Aorta (tissue), 5 donors: ENCODE measurements at regions of chr21 and their contacts with region 1.

Region 1: DNA sequence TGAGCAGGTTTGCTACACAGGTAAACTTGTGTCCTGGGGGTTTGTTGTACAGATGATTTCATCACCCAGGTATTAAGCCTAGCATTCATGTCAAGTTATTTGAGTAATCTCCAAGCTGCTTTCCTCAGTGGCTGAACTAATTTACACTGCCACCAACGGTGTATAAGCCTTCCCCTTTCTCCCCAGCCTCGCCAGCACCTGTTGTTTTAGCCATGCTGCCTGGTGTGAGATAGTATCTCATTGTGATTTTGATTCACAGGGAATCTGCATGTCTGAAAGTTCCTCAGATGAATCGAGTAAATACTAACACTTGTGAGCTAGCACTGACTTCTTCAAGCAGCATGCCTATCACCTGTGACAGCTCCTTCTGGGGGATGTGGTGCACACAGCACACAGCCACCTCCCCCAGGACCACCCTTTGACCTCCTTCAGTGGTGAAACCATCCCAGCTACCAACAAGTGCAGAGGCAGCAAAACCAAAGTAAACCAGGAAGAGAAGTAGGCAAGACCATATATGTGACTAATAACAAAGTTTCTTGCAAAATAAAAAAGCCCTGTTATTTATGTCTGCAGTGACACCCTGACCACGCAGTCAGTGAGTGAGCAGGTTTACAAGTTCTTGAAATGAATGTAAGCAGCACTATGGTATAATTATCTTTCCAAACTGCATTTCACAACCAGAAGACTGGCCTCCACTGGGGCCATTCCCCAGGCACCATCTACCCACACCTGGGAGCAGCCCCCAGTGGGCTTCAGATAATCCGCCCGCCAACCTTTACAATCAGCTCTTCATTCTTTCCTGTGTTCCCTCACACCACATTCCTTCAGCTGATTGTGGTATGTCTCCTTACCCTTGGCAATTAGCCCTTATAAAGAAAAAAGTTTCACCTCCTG is 173.7 kb downstream of the ETS2 start:
- DNase-seq: no peak
- ATAC-seq: no peak
- H3K4me3 ChIP-seq: no peak overlapping the region
- H3K27ac ChIP-seq: no peak overlapping the region
- H3K4me1 ChIP-seq: no peaks in the 10 kb centered on the region
- H3K27me3 ChIP-seq: no peaks in the 10 kb centered on the region

Region 2: DNA sequence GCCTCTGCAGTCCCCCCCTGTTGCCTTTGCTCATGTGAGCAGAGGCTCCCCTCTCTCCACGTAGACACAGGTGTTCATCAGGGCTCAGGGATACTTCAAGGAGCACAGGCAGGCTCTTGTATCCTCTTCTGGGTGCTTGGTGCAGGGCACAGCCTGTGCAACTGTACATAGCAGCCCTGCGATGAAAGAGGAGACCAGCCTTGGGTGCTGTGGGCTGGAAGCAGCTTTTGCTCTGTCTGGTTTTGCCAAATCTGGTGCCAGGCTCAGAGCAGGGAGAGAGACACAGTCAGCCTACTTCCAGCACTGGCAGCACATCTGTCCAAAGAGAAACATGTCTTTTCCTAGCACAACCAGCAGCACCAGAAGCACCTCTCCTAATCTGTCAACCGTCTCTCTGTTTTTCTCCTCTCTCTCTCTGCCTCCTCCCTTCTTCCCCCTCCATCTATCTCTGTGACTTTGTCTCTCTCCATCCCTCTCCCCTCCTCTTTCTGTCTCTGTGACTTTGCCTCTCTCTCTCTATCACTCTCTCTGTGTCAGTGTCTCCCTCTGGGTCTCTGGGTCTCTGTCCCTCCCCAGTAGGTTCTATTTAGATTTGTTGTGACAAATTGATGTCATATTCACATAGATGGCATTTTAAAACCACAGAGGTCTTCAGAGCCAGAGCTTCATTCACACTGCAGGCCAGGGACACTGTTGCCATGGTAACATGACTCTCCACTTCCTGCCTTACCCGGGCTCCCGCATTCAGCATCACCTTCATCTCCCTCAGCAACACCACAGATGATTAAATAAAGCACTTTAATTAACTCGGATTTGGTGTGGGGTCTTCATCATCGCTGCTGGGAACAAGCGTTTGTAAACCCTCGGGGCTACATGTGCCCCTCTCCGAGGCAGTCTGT is 41.4 kb before region 1 on chr21:
- intact Hi-C with region 1: loop called in 1 of 2 experiments (anchors 5 kb)
- DNase-seq: no peak
- ATAC-seq: no peak
- H3K4me3 ChIP-seq: no peak overlapping the region
- H3K27ac ChIP-seq: no peak overlapping the region
- H3K4me1 ChIP-seq: no peaks in the 10 kb centered on the region
- H3K27me3 ChIP-seq: no peaks in the 10 kb centered on the region

Region 3: DNA sequence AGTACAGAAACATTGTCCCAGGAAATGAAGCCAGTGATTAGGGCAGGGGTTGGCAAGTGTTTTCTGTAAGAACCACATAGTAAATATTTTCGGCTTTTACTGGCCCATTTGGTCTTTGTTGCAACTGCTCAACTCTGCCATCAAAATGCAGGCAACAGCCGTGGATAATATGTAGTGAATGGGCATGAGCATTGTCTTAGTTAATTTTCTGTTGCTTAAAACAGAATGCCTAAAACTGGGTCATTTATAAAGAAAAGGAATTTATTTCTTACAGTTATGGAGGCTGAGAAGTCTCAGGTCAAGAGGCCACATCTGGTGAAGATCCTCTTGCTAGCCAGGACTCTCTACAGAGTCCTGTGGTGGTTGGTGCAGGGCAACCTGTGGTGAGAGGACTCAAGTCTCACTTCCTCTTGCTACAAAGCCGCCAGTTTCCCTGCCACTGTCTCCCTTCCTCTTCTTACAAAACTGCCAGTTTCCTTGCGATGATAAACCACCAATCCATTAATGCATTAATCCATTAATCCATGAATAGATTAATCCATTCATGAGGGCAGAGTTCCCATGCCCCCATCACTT is 37.4 kb after region 1 on chr21:
- intact Hi-C with region 1: no loop called
- DNase-seq: peak; percentile 41 to 66
- ATAC-seq: no peak
- H3K4me3 ChIP-seq: no peak overlapping the region
- H3K27ac ChIP-seq: no peak overlapping the region
- H3K4me1 ChIP-seq: peaks cover 0 to 2% of the 10 kb centered on the region in 2 donors
- H3K27me3 ChIP-seq: no peaks in the 10 kb centered on the region

Region 4: DNA sequence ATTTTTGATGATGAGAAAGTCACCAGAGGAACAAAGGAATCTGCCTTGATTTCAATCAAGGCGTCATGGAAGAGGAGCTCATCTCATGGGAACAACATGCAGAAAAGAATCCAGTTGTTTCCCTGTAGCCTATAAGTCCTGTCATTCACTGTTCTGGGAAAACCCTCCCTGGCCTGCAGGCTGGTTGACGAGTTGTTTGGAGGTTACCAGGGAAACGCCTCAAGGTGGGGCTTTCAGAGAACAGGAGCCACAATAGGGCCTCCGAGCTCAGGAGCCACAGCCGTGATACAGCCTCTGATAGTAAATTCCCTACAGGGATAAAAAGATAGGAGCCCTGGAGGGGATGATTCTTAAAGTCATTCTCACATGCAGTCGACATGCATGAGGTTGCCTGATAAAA is 68.6 kb after region 1 on chr21:
- intact Hi-C with region 1: no loop called
- DNase-seq: peak in 1 of 2 donors; percentile 61
- ATAC-seq: no peak
- H3K4me3 ChIP-seq: no peak overlapping the region
- H3K27ac ChIP-seq: no peak overlapping the region
- H3K4me1 ChIP-seq: no peaks in the 10 kb centered on the region
- H3K27me3 ChIP-seq: no peaks in the 10 kb centered on the region